ENCODE measurements at regions of chr1 and their contacts with region 1.

Region 1: GRCh38 chr1:44721485-44722361 is 9.2 kb downstream of the RNU5D-1 start:
- DNase-seq: peak in 8 of 9 donors; percentile 62 to 84 (median 72)
- ATAC-seq: peak; percentile 92
- H3K4me3 ChIP-seq: peak overlapping the region; percentile 15
- H3K4me3 Mint-ChIP-seq: peak overlapping the region; percentile 53 to 87 (median 80)
- H3K27ac ChIP-seq: peak overlapping the region; percentile 64
- H3K27ac Mint-ChIP-seq: peak overlapping the region; percentile 74 to 98 (median 95)
- H3K4me1 ChIP-seq: peaks cover 26 to 73% of the 10 kb centered on the region in 2 donors
- H3K4me1 Mint-ChIP-seq: peaks cover 52 to 85% (median 74%) of the 10 kb centered on the region in 7 donors
- H3K27me3 ChIP-seq: no peaks in the 10 kb centered on the region
- H3K27me3 Mint-ChIP-seq: no peaks in the 10 kb centered on the region

Region 2: DNA sequence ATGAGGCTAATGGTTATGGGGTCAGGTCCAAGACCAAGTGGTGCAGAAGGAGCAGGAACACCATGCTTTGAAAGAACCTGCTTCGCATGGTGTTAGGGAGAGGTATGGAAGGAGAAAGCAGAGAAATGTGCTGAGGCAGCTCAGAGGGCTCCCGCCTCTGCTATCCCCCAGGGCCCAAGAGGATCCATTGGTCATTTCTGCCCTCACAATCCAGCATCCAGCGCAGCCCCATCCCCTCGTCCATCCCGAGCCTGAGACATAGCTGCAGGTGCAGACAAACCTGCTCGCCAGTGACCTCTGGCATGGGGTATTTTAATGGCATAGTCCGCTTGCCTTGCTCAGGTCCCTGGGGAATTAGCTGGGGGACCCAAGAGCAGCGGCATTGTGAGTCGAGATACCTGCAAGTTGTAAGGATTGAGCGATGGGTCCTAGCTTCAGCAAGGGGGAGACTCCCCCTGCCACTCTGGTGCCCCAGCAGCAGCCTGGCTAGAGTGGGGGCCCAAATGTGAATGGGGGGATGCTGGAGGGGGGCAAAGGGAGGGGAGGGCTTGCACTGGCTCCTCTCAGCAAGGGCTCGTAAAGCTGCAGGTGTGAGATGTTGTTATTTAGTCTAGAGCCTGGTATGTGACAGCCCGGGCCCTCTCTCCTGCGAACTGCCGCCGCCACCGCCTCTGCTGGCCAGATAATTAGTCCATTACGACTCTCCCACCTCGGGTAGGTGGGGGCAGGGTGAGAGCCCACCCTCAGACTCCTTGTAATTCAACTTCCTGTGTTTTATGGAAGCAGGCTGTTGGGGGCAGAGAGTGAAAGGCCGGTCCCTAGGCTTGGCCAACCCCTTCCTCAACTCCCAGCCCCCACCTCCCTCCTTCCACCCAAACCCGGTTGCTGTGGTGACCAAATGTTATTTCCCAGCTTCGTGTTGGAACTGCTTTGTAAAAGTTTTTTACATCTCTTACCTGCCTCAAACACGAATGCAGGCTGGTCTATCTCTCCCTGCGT is 197.8 kb before region 1 on chr1:
- CTCF ChIA-PET with region 1: no interaction called
- POLR2A ChIA-PET with region 1: no interaction called
- intact Hi-C with region 1: no loop called
- DNase-seq: no peak
- ATAC-seq: no peak
- H3K4me3 ChIP-seq: no peak overlapping the region
- H3K4me3 Mint-ChIP-seq: no peak overlapping the region
- H3K27ac ChIP-seq: no peak overlapping the region
- H3K27ac Mint-ChIP-seq: no peak overlapping the region
- H3K4me1 ChIP-seq: no peaks in the 10 kb centered on the region
- H3K4me1 Mint-ChIP-seq: peaks cover 0 to 9% (median 0%) of the 10 kb centered on the region in 7 donors
- H3K27me3 ChIP-seq: no peaks in the 10 kb centered on the region
- H3K27me3 Mint-ChIP-seq: peaks cover 0 to 5% (median 0%) of the 10 kb centered on the region in 5 donors

Region 3: GRCh38 chr1:44674113-44675000 is 47.4 kb before region 1 on chr1 and contains the starts of genes ARMH1 and TMEM53:
- CTCF ChIA-PET with region 1: no interaction called
- POLR2A ChIA-PET with region 1: interaction called, 14 read pairs
- intact Hi-C with region 1: loop called in 1 of 2 experiments (anchors 2 kb)
- DNase-seq: peak; percentile 91 to 96 (median 95)
- ATAC-seq: peak; percentile 94
- H3K4me3 ChIP-seq: peak within 1 kb of the TSS; percentile 81
- H3K4me3 Mint-ChIP-seq: peak within 1 kb of the TSS; percentile 83 to 94 (median 91)
- H3K27ac ChIP-seq: peak within 1 kb of the TSS; percentile 76
- H3K27ac Mint-ChIP-seq: peak within 1 kb of the TSS; percentile 84 to 94 (median 91)
- H3K4me1 ChIP-seq: peaks cover 0 to 6% of the 10 kb centered on the region in 2 donors
- H3K4me1 Mint-ChIP-seq: peaks cover 13 to 34% (median 23%) of the 10 kb centered on the region in 7 donors
- H3K27me3 ChIP-seq: no peaks in the 10 kb centered on the region
- H3K27me3 Mint-ChIP-seq: no peaks in the 10 kb centered on the region
- total RNA-seq, gene ARMH1: 65.8 to 205 (median 87.0) TPM
- total RNA-seq, gene TMEM53: 1.6 to 3.5 (median 1.9) TPM

Region 4: GRCh38 chr1:44707959-44708831 is 13.5 kb before region 1 on chr1:
- CTCF ChIA-PET with region 1: interaction called, 5 read pairs
- POLR2A ChIA-PET with region 1: interaction called, 239 read pairs
- intact Hi-C with region 1: no loop called
- DNase-seq: peak in 6 of 9 donors; percentile 35 to 59 (median 54)
- ATAC-seq: peak; percentile 92
- H3K4me3 ChIP-seq: no peak overlapping the region
- H3K4me3 Mint-ChIP-seq: peak overlapping the region; percentile 30 to 71 (median 64)
- H3K27ac ChIP-seq: no peak overlapping the region
- H3K27ac Mint-ChIP-seq: peak overlapping the region in 7 of 9 donors; percentile 0 to 48 (median 23)
- H3K4me1 ChIP-seq: peaks cover 0 to 8% of the 10 kb centered on the region in 2 donors
- H3K4me1 Mint-ChIP-seq: peaks cover 6 to 15% (median 12%) of the 10 kb centered on the region in 7 donors
- H3K27me3 ChIP-seq: no peaks in the 10 kb centered on the region
- H3K27me3 Mint-ChIP-seq: peaks cover 0 to 9% (median 0%) of the 10 kb centered on the region in 5 donors

Region 5: DNA sequence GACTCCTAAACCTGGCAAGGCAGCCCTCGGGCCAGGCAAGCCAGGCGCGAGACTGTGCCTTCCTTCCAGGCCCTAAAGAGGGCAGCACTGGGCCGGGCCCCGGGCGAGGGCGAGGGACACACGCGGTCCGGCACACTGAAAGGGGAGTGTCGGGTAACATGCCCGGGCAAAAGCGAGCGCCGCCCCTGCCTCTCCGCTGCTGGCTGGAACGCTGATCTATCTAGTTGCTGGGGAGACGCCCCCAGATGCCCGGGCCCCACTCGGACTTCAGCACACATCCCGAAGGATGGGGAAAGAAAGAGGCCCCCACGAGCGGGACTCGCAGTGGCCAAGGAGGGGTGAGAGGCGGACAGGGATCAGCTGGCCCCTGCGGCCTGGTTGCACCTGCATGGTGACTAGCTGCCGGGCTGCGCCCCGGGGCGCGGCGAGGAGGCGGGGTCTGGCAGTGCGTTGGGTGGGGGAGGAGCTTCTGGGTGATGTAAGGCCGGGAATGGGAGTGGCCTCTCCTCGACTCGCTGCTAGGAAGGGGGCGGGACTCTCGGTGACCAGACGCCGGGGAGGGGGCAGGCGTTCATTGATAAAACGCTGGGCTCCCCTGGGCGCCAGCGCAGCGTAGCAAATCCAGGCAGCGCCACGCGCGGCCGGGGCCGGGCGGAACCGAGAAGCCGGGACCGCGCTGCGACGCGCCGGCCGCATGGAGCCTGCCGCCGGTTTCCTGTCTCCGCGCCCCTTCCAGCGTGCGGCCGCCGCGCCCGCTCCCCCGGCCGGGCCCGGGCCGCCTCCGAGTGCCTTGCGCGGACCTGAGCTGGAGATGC is 78.3 kb after region 1 on chr1 and contains the start of gene PLK3:
- CTCF ChIA-PET with region 1: no interaction called
- POLR2A ChIA-PET with region 1: interaction called, 17 read pairs
- intact Hi-C with region 1: no loop called
- DNase-seq: peak; percentile 93 to 99 (median 98)
- ATAC-seq: peak; percentile 92
- H3K4me3 ChIP-seq: peak within 1 kb of the TSS; percentile 66
- H3K4me3 Mint-ChIP-seq: peak within 1 kb of the TSS; percentile 85 to 98 (median 93)
- H3K27ac ChIP-seq: peak within 1 kb of the TSS; percentile 94
- H3K27ac Mint-ChIP-seq: peak within 1 kb of the TSS; percentile 84 to 99 (median 98)
- H3K4me1 ChIP-seq: peaks cover 17 to 24% of the 10 kb centered on the region in 2 donors
- H3K4me1 Mint-ChIP-seq: peaks cover 19 to 43% (median 33%) of the 10 kb centered on the region in 7 donors
- H3K27me3 ChIP-seq: no peaks in the 10 kb centered on the region
- H3K27me3 Mint-ChIP-seq: no peaks in the 10 kb centered on the region
- total RNA-seq, gene PLK3: 92.8 to 456 (median 142) TPM

Region 6: GRCh38 chr1:44812822-44813543 is 91.3 kb after region 1 on chr1:
- CTCF ChIA-PET with region 1: no interaction called
- POLR2A ChIA-PET with region 1: interaction called, 50 read pairs
- intact Hi-C with region 1: no loop called
- DNase-seq: no peak
- ATAC-seq: no peak
- H3K4me3 ChIP-seq: peak overlapping the region; percentile 66
- H3K4me3 Mint-ChIP-seq: peak overlapping the region in 9 of 10 donors; percentile 45 to 94 (median 89)
- H3K27ac ChIP-seq: peak overlapping the region; percentile 81
- H3K27ac Mint-ChIP-seq: peak overlapping the region in 8 of 9 donors; percentile 95 to 100 (median 99)
- H3K4me1 ChIP-seq: peaks cover 45 to 56% of the 10 kb centered on the region in 2 donors
- H3K4me1 Mint-ChIP-seq: peaks cover 52 to 77% (median 63%) of the 10 kb centered on the region in 7 donors
- H3K27me3 ChIP-seq: no peaks in the 10 kb centered on the region
- H3K27me3 Mint-ChIP-seq: peaks cover 0 to 3% (median 0%) of the 10 kb centered on the region in 5 donors

Region 7: DNA sequence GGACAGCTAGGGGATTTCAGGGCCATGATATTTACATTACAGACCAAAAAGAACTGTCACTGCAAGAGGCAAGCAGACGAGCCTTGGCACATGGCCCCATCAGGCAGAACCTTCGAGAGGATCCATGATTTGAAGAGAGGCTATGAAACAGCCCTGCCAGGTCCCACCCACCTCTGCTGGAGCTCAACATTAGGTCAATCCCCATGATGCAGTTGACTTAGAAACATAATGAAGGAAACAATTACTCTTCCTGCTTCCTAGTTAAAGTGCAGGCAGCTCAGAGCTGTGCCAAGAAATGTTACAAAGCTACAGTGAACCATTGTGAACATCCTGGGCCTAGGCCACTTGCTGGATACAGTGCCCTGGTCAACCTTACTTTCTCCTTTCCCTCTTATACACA is 163.0 kb after region 1 on chr1:
- CTCF ChIA-PET with region 1: no interaction called
- POLR2A ChIA-PET with region 1: no interaction called
- intact Hi-C with region 1: no loop called
- DNase-seq: no peak
- ATAC-seq: no peak
- H3K4me3 ChIP-seq: no peak overlapping the region
- H3K4me3 Mint-ChIP-seq: no peak overlapping the region
- H3K27ac ChIP-seq: no peak overlapping the region
- H3K27ac Mint-ChIP-seq: no peak overlapping the region
- H3K4me1 ChIP-seq: no peaks in the 10 kb centered on the region
- H3K4me1 Mint-ChIP-seq: no peaks in the 10 kb centered on the region
- H3K27me3 ChIP-seq: no peaks in the 10 kb centered on the region
- H3K27me3 Mint-ChIP-seq: no peaks in the 10 kb centered on the region

Region 8: GRCh38 chr1:44985747-44986359 is 264.1 kb after region 1 on chr1:
- CTCF ChIA-PET with region 1: no interaction called
- POLR2A ChIA-PET with region 1: interaction called, 10 read pairs
- intact Hi-C with region 1: loop called in 1 of 2 experiments (anchors 5 kb)
- DNase-seq: no peak
- ATAC-seq: no peak
- H3K4me3 ChIP-seq: peak overlapping the region; percentile 77
- H3K4me3 Mint-ChIP-seq: peak overlapping the region; percentile 90 to 100 (median 98)
- H3K27ac ChIP-seq: peak overlapping the region; percentile 68
- H3K27ac Mint-ChIP-seq: peak overlapping the region; percentile 75 to 99 (median 92)
- H3K4me1 ChIP-seq: peaks cover 8 to 13% of the 10 kb centered on the region in 2 donors
- H3K4me1 Mint-ChIP-seq: peaks cover 7 to 39% (median 23%) of the 10 kb centered on the region in 7 donors
- H3K27me3 ChIP-seq: no peaks in the 10 kb centered on the region
- H3K27me3 Mint-ChIP-seq: no peaks in the 10 kb centered on the region